GM12878 (cell line): ENCODE measurements at regions of chr11 and their contacts with region 1.

Region 1: DNA sequence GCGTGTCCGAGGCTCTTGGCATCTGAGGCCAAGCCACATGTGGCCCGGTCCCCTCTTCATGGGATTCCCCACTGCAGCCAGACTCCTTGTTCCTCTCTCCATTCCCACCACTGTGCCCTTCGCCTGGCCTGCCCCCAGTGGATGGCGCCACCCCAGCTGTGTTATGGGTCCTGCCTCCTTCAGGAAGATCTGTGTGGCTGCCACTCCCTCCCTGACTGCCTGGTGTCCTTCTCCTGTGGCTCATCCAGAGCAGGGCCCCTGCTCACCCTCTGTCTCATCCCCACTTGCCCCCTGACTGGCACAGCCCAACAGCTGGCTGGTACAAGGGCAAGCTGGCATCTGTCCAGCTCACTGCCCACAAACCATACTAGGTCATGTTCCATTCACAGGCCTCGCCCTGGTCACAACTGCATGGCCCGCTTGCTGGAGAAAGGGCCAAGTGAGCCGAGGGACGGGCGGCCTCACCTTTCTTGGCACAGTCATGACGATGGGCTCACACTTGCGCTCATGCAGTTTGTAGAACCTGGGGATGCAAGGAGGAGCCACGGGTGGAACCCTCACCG is 1.9 kb upstream of the PTPRCAP start:
- DNase-seq: no peak
- ATAC-seq: no peak
- H3K4me3 ChIP-seq: peak overlapping the region; percentile 90
- H3K27ac ChIP-seq: peak overlapping the region; percentile 99
- H3K4me1 ChIP-seq: peaks cover 29% of the 10 kb centered on the region
- H3K27me3 ChIP-seq: no peaks in the 10 kb centered on the region
- CTCF ChIP-seq: peak; percentile 23 to 49 (median 24); a peak in 4 of 6 replicates
- EP300 ChIP-seq: no peak
- POLR2A ChIP-seq: no peak
- RAD21 ChIP-seq: no peak

Region 2: DNA sequence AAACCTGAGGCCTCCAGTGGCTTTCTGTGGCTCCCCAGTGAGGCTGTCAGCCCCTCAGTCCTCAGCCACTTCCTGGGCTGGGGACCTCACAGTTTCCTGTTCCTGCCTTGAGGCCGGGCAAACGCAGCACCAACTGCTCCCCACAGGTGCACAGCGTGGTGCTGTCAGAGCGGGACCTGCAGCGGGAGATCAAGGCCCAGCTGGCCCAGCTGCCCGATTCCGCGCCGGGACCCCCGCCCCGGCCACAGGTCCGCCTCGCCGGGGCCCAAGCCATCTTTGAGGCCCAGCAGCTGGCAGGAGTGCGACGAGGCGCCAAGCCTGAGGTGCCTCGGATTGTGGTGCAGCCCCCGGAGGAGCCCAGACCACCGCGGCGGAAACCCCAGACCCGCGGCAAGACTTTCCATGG is 30.1 kb before region 1 on chr11:
- CTCF ChIA-PET with region 1: interaction called, 53 read pairs
- POLR2A ChIA-PET with region 1: interaction called, 95 read pairs
- RAD21 ChIA-PET with region 1: interaction called, 112 read pairs
- SMC1A ChIA-PET with region 1: interaction called, 46 read pairs
- in situ Hi-C with region 1: no loop called
- intact Hi-C with region 1: loop called (anchors 5 kb)
- DNase-seq: no peak
- ATAC-seq: peak; percentile 77
- H3K4me3 ChIP-seq: peak overlapping the region; percentile 48; the same call in 1 of the 2 replicates
- H3K27ac ChIP-seq: peak overlapping the region; percentile 84
- H3K4me1 ChIP-seq: peaks cover 61% of the 10 kb centered on the region
- H3K27me3 ChIP-seq: no peaks in the 10 kb centered on the region
- CTCF ChIP-seq: no peak
- EP300 ChIP-seq: no peak; a peak in 1 of 4 replicates
- POLR2A ChIP-seq: peak; percentile 83
- RAD21 ChIP-seq: no peak

Region 3: GRCh38 chr11:67428052-67428914 is 11.1 kb before region 1 on chr11 and contains the start of gene RPS6KB2:
- CTCF ChIA-PET with region 1: interaction called, 4 read pairs
- POLR2A ChIA-PET with region 1: interaction called, 25 read pairs
- RAD21 ChIA-PET with region 1: interaction called, 8 read pairs
- SMC1A ChIA-PET with region 1: interaction called, 10 read pairs
- in situ Hi-C with region 1: no loop called
- intact Hi-C with region 1: no loop called
- DNase-seq: peak; percentile 95
- ATAC-seq: peak; percentile 85
- H3K4me3 ChIP-seq: peak within 1 kb of the TSS; percentile 100
- H3K27ac ChIP-seq: peak within 1 kb of the TSS; percentile 69
- H3K4me1 ChIP-seq: no peaks in the 10 kb centered on the region; the same call in 1 of the 2 replicates
- H3K27me3 ChIP-seq: no peaks in the 10 kb centered on the region
- CTCF ChIP-seq: no peak
- EP300 ChIP-seq: no peak
- POLR2A ChIP-seq: peak; percentile 87
- RAD21 ChIP-seq: no peak
- polyA plus RNA-seq, gene RPS6KB2: 0.39 to 2.3 TPM

Region 4: GRCh38 chr11:67463680-67464410 is 24.4 kb after region 1 on chr11:
- CTCF ChIA-PET with region 1: interaction called, 20 read pairs
- POLR2A ChIA-PET with region 1: interaction called, 78 read pairs
- RAD21 ChIA-PET with region 1: interaction called, 32 read pairs
- SMC1A ChIA-PET with region 1: interaction called, 27 read pairs
- in situ Hi-C with region 1: no loop called
- intact Hi-C with region 1: loop called (anchors 2 kb)
- DNase-seq: no peak
- ATAC-seq: no peak
- H3K4me3 ChIP-seq: peak overlapping the region; percentile 74
- H3K27ac ChIP-seq: peak overlapping the region; percentile 77
- H3K4me1 ChIP-seq: peaks cover 41% of the 10 kb centered on the region
- H3K27me3 ChIP-seq: no peaks in the 10 kb centered on the region
- CTCF ChIP-seq: no peak
- EP300 ChIP-seq: no peak
- POLR2A ChIP-seq: peak; percentile 56
- RAD21 ChIP-seq: no peak

Region 5: DNA sequence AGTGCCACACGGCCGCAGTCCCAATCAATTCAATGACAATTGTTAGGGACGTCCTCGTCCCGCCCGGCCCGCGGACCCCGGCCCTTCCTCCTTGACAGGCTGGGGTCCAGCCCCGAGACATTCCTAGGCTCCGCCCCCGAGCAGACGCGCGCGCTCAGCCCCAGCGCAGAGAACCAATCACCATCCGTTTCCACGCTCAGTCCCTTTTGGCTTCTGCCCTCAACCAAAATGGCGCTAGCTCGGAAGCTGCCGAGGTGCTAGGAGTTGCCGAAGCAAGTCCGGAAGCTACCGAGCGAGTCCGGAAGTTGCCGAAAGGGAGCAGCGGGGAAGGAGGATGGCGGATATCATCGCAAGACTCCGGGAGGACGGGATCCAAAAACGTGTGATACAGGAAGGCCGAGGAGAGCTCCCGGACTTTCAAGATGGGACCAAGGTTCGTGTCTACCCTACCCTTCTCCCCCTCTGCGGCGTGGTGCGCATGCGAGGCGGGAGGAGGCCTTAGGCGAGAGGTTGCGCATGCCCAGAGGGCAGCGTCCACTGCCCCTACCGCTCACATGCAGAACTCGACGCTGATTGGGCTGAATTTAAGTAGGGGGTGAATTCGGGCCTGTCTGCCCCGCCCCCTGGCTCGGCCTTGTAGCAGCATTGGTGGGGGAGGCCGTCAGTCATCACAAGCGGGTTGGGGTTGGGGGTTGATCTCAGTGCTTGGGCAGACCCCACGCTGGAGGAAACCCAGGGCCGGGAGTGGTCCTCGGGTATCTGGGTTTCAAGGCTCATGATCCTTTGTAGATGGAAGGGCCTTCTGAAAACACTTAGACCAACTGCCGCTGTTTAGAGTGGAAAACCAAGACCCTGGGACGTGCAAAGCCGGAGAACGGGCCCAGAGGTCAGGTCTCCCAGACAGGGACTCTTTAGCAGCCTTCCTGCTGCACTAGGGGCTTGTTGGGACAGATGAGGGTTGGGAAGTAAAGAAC is 43.7 kb after region 1 on chr11 and contains the start of gene AIP:
- CTCF ChIA-PET with region 1: interaction called, 9 read pairs
- POLR2A ChIA-PET with region 1: interaction called, 53 read pairs
- RAD21 ChIA-PET with region 1: interaction called, 68 read pairs
- SMC1A ChIA-PET with region 1: interaction called, 43 read pairs
- in situ Hi-C with region 1: no loop called
- intact Hi-C with region 1: loop called (anchors 2 kb)
- DNase-seq: peak; percentile 97
- ATAC-seq: peak; percentile 77
- H3K4me3 ChIP-seq: peak within 1 kb of the TSS; percentile 67
- H3K27ac ChIP-seq: peak within 1 kb of the TSS; percentile 70
- H3K4me1 ChIP-seq: peaks cover 43% of the 10 kb centered on the region
- H3K27me3 ChIP-seq: no peaks in the 10 kb centered on the region
- CTCF ChIP-seq: peak in 1 of 3 experiments; percentile 19; a peak in 1 of 6 replicates
- EP300 ChIP-seq: no peak
- POLR2A ChIP-seq: peak; percentile 78
- RAD21 ChIP-seq: no peak
- polyA plus RNA-seq, gene AIP: 12.6 to 29.7 TPM